OCI-LY7 (cell line): ENCODE measurements at regions of chr13 and their contacts with region 1.

Region 1: GRCh38 chr13:31174018-31174417 is 12.3 kb upstream of the HSPH1 start:
- DNase-seq: no peak
- H3K4me3 ChIP-seq: no peak overlapping the region
- H3K27ac ChIP-seq: no peak overlapping the region
- H3K4me1 ChIP-seq: no peaks in the 10 kb centered on the region
- CTCF ChIP-seq: 0 out of 2 replicates have a peak, but pooled peaks have one; percentile 25

Region 2: DNA sequence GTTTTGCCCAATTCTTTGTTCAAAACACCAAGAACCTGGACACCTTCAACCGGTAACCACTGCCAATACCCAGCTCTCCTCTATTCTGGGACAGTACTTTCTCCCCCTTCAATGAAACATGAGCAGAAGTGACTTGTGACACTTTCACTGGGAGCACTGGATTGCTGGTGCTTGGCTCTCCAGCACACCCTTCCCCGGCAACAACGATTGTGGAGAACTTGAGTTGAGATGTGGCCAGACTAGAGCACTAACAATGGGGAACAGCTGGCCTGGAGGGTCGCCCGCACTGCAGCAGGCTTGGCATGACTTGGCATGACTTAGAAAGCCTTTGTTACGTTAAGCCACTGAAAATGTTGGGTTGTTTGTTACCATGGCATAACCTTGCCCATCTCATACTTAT is 18.3 kb after region 1 on chr13:
- CTCF ChIA-PET with region 1: no interaction called
- POLR2A ChIA-PET with region 1: interaction called, 12 read pairs
- intact Hi-C with region 1: no loop called
- DNase-seq: no peak
- H3K4me3 ChIP-seq: no peak overlapping the region
- H3K27ac ChIP-seq: no peak overlapping the region
- H3K4me1 ChIP-seq: no peaks in the 10 kb centered on the region
- CTCF ChIP-seq: no peak